Posterior vena cava (tissue), 2 donors: ENCODE measurements at regions of chr7 and their contacts with region 1.

Region 1: DNA sequence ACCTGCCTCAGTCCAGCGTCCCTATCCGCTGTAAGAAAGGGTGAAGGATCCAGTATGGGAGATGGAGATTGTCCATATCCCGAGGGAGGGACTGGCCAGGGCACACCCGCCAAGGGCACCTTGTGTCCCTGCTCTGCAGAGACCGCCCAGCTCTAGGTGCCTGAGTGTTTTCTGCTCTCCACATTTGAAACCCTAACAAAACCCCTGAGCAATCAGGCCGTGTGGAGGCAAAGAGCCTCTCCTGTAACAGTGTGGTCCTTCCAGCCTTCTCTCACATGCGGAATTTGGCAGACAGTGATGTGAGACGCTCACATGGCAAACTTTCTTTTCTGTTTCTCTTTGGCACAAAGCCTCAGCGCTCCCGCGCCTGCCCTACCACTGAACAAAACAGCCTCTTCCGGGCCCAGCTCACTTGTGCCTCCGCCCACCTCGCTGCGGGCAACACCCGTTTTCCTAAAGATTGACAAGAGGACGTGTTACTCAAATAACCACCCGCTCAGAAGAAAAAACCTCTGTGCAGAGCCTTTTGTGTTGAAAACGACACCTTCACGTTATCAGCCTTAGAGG is 514.8 kb downstream of the DNAJB6 start:
- DNase-seq: peak; percentile 88

Region 2: DNA sequence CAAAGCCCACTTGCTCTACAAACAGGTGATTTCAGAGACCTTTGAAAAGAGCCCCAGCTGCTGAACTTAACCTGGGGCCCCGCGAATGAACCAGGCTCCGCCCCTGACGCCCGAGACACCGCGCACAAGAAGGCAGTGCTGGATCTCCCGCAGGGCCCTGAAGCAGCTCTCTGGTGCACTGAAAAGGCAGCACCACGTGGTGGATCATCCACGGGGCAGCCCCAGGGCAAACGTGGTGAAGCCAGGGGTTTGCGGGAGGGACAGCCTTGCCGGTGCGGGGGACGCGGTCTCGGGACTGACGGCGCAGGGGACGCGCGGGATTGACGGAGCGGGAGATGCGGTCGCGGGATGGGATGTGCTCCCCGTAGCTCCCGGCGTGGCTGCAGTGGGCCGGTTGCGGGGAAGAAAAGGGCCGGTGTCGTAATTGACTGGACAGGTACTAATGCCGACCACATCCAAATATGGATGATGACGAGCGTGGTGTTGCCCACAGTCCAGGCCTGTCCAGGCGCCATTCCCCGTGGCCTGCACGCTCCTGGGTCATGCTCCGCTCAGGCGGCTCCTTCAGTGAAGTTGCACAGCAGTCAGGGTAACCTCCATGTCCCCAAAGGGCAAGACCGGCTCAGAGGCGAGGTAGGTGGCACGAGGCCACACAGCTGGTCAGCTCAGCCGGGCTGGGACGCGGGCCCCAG is 93.7 kb before region 1 on chr7:
- intact Hi-C with region 1: loop called in 1 of 2 experiments (anchors 5 kb)
- DNase-seq: peak; percentile 66